SK-N-SH (cell line): ENCODE measurements at regions of chr20 and their contacts with region 1.

Region 1: DNA sequence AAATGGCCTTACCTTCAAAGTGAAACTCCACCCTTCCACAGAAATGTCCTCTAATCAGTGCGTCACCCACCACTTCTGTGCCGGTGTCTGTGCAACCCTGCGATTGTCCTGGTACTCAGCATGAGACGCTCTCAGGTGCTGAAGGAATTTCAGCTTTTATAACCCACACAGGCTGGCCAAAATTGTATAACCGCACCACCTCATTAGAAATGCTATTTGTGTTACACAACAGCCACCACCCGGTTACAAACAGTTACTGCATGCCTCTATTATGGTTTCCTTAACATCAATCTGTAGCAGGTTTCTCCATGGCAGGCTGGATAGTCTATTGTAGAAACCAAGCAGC is 51.5 kb downstream of the SLC23A2 start:
- DNase-seq: peak; percentile 46
- H3K4me3 ChIP-seq: no peak overlapping the region
- H3K27ac ChIP-seq: no peak overlapping the region
- H3K4me1 ChIP-seq: peaks cover 2 to 5% of the 10 kb centered on the region in 2 experiments; a peak in 1 of 4 replicates
- H3K27me3 ChIP-seq: no peaks in the 10 kb centered on the region
- CTCF ChIP-seq: peak; percentile 57
- EP300 ChIP-seq: no peak
- RAD21 ChIP-seq: peak; percentile 81

Region 2: DNA sequence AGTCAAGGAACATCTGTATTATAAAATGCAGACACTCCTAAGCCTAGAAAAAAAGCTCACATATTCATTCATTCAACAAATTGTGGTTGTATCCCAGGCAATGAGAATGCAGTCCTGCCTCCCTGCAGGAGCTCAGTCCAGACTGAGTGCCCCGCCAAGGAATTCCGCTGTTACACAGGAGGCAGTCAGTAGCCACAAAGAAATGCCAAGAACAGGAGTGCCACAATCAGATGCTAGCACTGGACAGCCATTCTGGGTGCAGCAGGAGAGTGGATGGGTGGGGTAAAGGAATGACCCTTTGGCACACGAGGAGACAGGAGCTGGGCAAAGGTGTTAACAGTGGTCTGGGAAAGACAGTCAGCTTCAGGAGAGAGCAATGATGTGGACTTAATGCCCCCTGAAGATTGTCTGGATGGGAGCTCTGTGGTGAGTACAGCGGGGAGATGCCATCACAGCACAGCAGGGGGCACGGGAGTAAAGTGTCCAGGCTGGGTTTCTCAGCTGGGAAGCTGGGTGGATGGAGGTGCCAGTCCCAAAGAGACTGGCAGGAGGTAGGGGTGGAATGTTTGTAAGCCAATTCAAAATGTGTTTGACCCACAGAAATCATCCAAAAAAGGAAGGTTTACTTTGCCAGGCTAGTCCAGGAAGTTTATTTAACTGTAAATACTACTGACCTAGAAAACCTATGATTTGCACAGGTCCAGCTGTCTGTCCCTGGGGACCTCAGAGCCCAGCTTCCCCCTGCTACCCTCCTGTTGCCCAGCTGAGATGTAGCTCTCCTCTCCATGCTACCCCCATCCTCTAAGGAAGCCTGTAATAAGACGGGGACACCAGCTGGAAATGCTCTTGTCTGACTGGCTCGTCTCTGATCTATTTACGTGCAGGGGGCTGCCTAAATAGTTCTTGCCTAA is 32.6 kb before region 1 on chr20:
- CTCF ChIA-PET with region 1: interaction called, 12 read pairs
- POLR2A ChIA-PET with region 1: no interaction called
- DNase-seq: no peak
- H3K4me3 ChIP-seq: no peak overlapping the region
- H3K27ac ChIP-seq: no peak overlapping the region
- H3K4me1 ChIP-seq: peaks cover 0 to 8% of the 10 kb centered on the region in 2 experiments; a peak in 2 of 4 replicates
- H3K27me3 ChIP-seq: no peaks in the 10 kb centered on the region
- CTCF ChIP-seq: 0 out of 2 replicates have a peak, but pooled peaks have one; percentile 11
- EP300 ChIP-seq: no peak
- RAD21 ChIP-seq: no peak

Region 3: GRCh38 chr20:4932061-4932460 is 17.7 kb before region 1 on chr20:
- CTCF ChIA-PET with region 1: interaction called, 11 read pairs
- POLR2A ChIA-PET with region 1: no interaction called
- DNase-seq: no peak
- H3K4me3 ChIP-seq: no peak overlapping the region
- H3K27ac ChIP-seq: no peak overlapping the region
- H3K4me1 ChIP-seq: peaks cover 0 to 5% of the 10 kb centered on the region in 2 experiments; a peak in 1 of 4 replicates
- H3K27me3 ChIP-seq: no peaks in the 10 kb centered on the region
- CTCF ChIP-seq: no peak
- EP300 ChIP-seq: no peak
- RAD21 ChIP-seq: no peak